ENCODE measurements at regions of chr16 and their contacts with region 1.

Region 1: GRCh38 chr16:8892101-8892575 is 10.0 kb downstream of the LITAFD start:
- DNase-seq: no peak
- H3K4me3 ChIP-seq: no peak overlapping the region
- H3K27ac ChIP-seq: no peak overlapping the region
- H3K4me1 ChIP-seq: no peaks in the 10 kb centered on the region
- H3K27me3 ChIP-seq: no peaks in the 10 kb centered on the region

Region 2: GRCh38 chr16:8863594-8864424 is 28.3 kb before region 1 on chr16:
- CTCF ChIA-PET with region 1: no interaction called
- POLR2A ChIA-PET with region 1: no interaction called
- DNase-seq: no peak
- H3K4me3 ChIP-seq: no peak overlapping the region
- H3K27ac ChIP-seq: no peak overlapping the region
- H3K4me1 ChIP-seq: peaks cover 3 to 37% (median 25%) of the 10 kb centered on the region in 4 experiments
- H3K27me3 ChIP-seq: no peaks in the 10 kb centered on the region

Region 3: GRCh38 chr16:8878521-8878911 is 13.6 kb before region 1 on chr16:
- CTCF ChIA-PET with region 1: interaction called, 34 read pairs
- POLR2A ChIA-PET with region 1: interaction called, 3 read pairs
- DNase-seq: no peak
- H3K4me3 ChIP-seq: no peak overlapping the region
- H3K27ac ChIP-seq: no peak overlapping the region
- H3K4me1 ChIP-seq: peaks cover 0 to 8% (median 5%) of the 10 kb centered on the region in 4 experiments
- H3K27me3 ChIP-seq: no peaks in the 10 kb centered on the region